ENCODE measurements at regions of chr5 and their contacts with region 1.

Region 1: GRCh38 chr5:139968547-139969261 is 74.4 kb downstream of the NRG2 start:
- DNase-seq: peak; percentile 83 to 91 (median 84)
- ATAC-seq: peak; percentile 82 to 98 (median 94)
- H3K4me3 ChIP-seq: peak overlapping the region in 1 of 12 donors; percentile 11
- H3K27ac ChIP-seq: peak overlapping the region in 3 of 12 donors; percentile 16 to 37 (median 20)
- H3K4me1 ChIP-seq: peaks cover 11 to 36% (median 19%) of the 10 kb centered on the region in 12 donors
- H3K27me3 ChIP-seq: peaks cover 0 to 5% (median 0%) of the 10 kb centered on the region in 9 donors
- CTCF ChIP-seq: peak; percentile 98 to 100 (median 99)
- POLR2A ChIP-seq: no peak

Region 2: GRCh38 chr5:139863855-139864558 is 104.7 kb before region 1 on chr5:
- intact Hi-C with region 1: loop called in 8 of 10 experiments (anchors 5 to 10 kb)
- DNase-seq: peak; percentile 51 to 73 (median 67)
- ATAC-seq: peak; percentile 37 to 79 (median 64)
- H3K4me3 ChIP-seq: no peak overlapping the region
- H3K27ac ChIP-seq: peak overlapping the region in 3 of 12 donors; percentile 12 to 34 (median 30)
- H3K4me1 ChIP-seq: peaks cover 0 to 16% (median 11%) of the 10 kb centered on the region in 12 donors
- H3K27me3 ChIP-seq: no peaks in the 10 kb centered on the region
- CTCF ChIP-seq: peak; percentile 73 to 94 (median 89)
- POLR2A ChIP-seq: no peak

Region 3: GRCh38 chr5:139869042-139869790 is 99.5 kb before region 1 on chr5:
- intact Hi-C with region 1: loop called in 8 of 10 experiments (anchors 5 to 10 kb)
- DNase-seq: peak in 1 of 5 donors; percentile 56
- ATAC-seq: peak in 1 of 4 donors; percentile 31
- H3K4me3 ChIP-seq: no peak overlapping the region
- H3K27ac ChIP-seq: peak overlapping the region in 5 of 12 donors; percentile 15 to 44 (median 29)
- H3K4me1 ChIP-seq: peaks cover 0 to 12% (median under 1%) of the 10 kb centered on the region in 12 donors
- H3K27me3 ChIP-seq: no peaks in the 10 kb centered on the region
- CTCF ChIP-seq: no peak
- POLR2A ChIP-seq: no peak

Region 4: GRCh38 chr5:139882961-139883539 is 85.7 kb before region 1 on chr5:
- intact Hi-C with region 1: loop called in 2 of 10 experiments (anchors 5 kb)
- DNase-seq: no peak
- ATAC-seq: peak in 1 of 4 donors; percentile 12
- H3K4me3 ChIP-seq: no peak overlapping the region
- H3K27ac ChIP-seq: peak overlapping the region in 1 of 12 donors; percentile 47
- H3K4me1 ChIP-seq: peaks cover 0 to 34% (median 15%) of the 10 kb centered on the region in 12 donors
- H3K27me3 ChIP-seq: no peaks in the 10 kb centered on the region
- CTCF ChIP-seq: no peak
- POLR2A ChIP-seq: no peak

Region 5: DNA sequence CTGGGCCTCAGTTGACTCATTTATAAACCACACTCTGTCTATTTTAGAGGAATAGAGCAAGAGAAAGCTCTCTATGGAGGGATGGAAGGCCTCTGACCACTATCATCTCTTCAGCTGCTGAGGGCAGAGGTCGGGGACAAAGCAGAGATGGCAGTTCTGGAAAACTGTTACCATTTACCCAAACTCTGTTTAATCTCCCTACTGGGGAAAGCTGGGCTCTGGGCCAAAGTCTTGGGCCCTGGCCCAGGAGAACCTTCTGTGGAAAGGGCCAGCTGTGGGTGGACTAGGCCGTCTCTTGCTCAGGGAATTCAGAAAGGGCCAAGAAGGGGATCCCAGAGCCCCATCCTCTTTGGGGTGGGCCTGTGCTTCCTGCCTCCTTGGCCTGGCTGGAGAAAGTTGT is 73.1 kb before region 1 on chr5:
- intact Hi-C with region 1: loop called in 2 of 10 experiments (anchors 5 to 10 kb)
- DNase-seq: peak in 3 of 5 donors; percentile 46 to 53 (median 51)
- ATAC-seq: peak in 1 of 4 donors; percentile 35
- H3K4me3 ChIP-seq: no peak overlapping the region
- H3K27ac ChIP-seq: peak overlapping the region in 1 of 12 donors; percentile 1
- H3K4me1 ChIP-seq: peaks cover 0 to 34% (median 19%) of the 10 kb centered on the region in 12 donors
- H3K27me3 ChIP-seq: no peaks in the 10 kb centered on the region
- CTCF ChIP-seq: no peak
- POLR2A ChIP-seq: no peak

Region 6: DNA sequence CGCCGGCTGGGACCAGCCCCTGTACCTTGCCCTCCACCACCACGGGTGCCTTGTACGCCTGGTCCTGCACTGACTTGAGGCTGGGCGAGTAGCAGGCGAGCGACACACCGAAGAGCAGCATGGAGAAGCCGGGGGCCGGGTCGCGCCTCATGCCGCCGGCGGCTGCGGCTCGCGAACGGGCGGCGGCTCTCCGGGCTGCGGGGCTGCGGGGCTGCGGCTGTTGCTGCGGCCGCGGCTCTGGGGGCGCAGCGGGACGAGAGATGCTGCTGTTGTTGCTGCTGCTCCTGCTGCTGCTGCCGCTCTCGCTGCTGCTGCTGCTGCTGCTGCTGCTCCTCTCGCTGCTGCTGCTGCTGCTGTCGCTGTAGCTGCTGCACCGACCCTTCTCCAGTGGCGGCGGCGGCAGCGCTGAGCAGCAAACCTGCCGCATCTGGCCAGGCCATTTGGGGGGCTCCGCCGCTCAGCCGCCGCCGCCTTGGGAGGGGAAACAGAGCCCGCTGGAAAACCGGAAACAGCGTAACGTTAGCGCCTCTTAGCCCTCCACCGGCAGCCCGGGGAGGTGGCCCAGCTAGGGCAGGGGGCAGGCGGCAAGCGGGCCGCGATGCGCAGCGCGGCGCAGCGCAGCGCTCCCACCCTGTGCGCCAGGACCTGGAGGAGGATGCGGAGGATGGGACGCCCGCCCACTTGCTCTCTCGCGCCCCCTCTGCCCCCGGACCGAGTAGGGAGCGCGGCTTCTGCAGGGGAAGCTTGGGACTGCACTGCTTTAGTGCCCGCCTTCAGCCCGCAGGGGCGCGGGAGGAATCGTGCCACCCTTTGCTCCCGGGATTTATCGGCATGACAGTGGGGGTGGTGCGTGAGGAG is 74.2 kb after region 1 on chr5 and contains the start of gene NRG2:
- intact Hi-C with region 1: loop called in 3 of 10 experiments (anchors 5 kb)
- DNase-seq: peak; percentile 74 to 88 (median 77)
- ATAC-seq: peak; percentile 80 to 92 (median 86)
- H3K4me3 ChIP-seq: peak within 1 kb of the TSS; percentile 57 to 89 (median 72)
- H3K27ac ChIP-seq: peak within 1 kb of the TSS; percentile 43 to 93 (median 82)
- H3K4me1 ChIP-seq: peaks cover 0 to 48% (median 27%) of the 10 kb centered on the region in 12 donors
- H3K27me3 ChIP-seq: peaks cover 0 to 47% (median 0%) of the 10 kb centered on the region in 9 donors
- CTCF ChIP-seq: peak; percentile 35 to 69 (median 58)
- POLR2A ChIP-seq: peak in 1 of 2 donors; percentile 41
- total RNA-seq, gene NRG2: 1.9 to 4.8 (median 3.4) TPM

Region 7: DNA sequence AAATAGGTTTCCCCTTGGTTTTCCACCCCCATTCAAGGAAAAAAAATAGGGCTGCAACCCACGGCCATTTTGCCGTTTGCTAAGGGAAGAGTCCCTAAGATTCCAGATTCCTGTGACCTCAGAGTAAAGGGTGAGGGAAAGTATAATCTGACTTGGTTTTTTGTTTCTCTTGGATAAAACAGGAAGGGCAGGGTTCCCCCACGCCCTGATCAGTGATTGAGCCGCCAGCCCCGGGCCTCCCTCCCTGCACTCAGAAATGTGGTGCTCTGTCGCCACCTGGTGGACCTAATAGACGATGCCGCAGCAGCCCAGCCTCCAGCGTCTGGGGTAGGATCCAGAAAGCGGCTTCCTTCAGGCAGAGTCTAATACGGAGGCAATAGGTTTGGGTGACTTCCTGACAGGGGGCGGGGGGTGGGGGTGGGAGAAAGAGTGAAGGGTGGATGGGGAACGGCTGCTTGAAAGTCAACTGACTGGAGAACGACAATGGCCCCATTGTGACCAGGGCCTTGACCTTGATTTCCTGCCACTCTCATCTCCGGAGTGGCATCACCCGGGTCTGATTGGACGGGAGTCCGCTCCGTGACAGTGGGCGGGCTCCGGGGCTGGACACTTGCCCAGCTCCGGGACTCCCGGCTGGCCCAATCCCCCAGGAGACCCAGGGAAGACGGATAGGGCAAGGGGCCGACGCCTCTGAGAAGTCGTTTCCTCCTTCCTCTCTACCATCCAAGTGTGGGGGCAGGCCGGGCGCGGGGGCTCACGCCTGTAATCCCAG is 188.5 kb after region 1 on chr5:
- intact Hi-C with region 1: loop called in 2 of 10 experiments (anchors 2 to 5 kb)
- DNase-seq: peak; percentile 88 to 93 (median 90)
- ATAC-seq: peak; percentile 93 to 96 (median 96)
- H3K4me3 ChIP-seq: peak overlapping the region in 11 of 12 donors; percentile 15 to 57 (median 48)
- H3K27ac ChIP-seq: peak overlapping the region in 11 of 12 donors; percentile 11 to 71 (median 43)
- H3K4me1 ChIP-seq: peaks cover 0 to 19% (median 9%) of the 10 kb centered on the region in 12 donors
- H3K27me3 ChIP-seq: no peaks in the 10 kb centered on the region
- CTCF ChIP-seq: peak; percentile 85 to 93 (median 90)
- POLR2A ChIP-seq: no peak

Measured in heart left ventricle (tissue), 16 donors.